Activated B cell treated with CpG ODN at 0.5 μM for 24 hours (primary cell): ENCODE measurements at regions of chr12 and their contacts with region 1.

Region 1: GRCh38 chr12:26832822-26833742 is at the start of gene ITPR2:
- DNase-seq: peak; percentile 94
- ATAC-seq: peak; percentile 89
- H3K4me3 Mint-ChIP-seq: peak within 1 kb of the TSS; percentile 96
- H3K27ac Mint-ChIP-seq: peak within 1 kb of the TSS; percentile 99
- H3K4me1 Mint-ChIP-seq: peaks cover 45% of the 10 kb centered on the region
- H3K27me3 Mint-ChIP-seq: no peaks in the 10 kb centered on the region
- CTCF ChIP-seq: no peak
- total RNA-seq, gene ITPR2: 66.3 and 74.5 TPM in 2 replicates

Region 2: DNA sequence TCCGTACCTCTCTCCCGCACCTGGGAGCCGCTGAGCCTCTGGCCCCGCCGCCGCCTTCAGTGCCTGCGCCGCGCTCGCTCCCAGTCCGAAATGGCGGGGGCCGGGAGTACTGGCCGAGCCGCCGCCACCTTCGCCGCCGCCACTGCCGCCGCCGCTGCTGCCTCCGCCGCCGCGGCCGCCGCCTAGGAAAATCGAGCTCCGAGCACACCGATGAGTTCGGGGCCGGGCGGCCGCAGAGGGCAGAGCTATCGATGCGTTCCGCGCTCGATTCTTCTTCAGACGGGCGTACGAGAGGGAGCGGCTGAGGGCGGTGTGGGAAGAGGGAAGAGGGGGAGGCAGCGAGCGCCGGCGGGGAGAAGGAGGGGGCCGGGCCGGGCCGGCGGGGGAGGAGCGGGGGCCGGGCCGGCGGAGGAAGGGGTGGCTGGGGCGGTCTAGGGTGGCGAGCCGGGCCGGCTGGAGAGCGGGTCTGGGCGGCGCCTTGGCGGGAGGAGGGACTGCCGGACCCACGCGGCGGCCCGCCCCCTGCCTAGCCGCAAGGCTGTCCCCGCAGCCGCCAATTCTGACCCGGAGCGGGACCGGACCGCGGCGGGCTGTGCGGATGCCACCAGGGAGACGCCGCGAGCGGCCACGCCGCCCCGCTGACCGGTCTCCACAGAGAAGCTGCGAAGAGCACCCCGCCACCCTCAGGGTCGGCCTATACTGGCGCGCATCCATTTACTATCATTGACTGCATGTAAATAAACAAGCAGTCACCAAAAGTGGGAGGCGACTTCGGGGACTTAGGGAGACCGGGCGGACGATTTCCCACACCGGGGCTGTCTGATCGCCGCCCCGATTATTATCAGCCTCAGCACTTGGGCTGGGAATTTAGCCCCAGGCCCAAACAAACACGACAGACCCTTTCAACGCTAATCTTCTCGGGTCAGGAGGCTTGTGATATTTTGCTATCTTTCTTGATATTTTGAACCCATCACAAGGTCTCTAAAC is 1582.0 kb before region 1 on chr12 and contains the start of gene KRAS:
- CTCF ChIA-PET with region 1: no interaction called
- POLR2A ChIA-PET with region 1: no interaction called
- intact Hi-C with region 1: loop called (anchors 5 kb)
- DNase-seq: peak; percentile 88
- ATAC-seq: peak; percentile 85
- H3K4me3 Mint-ChIP-seq: peak within 1 kb of the TSS; percentile 95
- H3K27ac Mint-ChIP-seq: peak within 1 kb of the TSS; percentile 95
- H3K4me1 Mint-ChIP-seq: peaks cover 48% of the 10 kb centered on the region
- H3K27me3 Mint-ChIP-seq: no peaks in the 10 kb centered on the region
- CTCF ChIP-seq: no peak
- total RNA-seq, gene KRAS: 43.3 and 45.8 TPM in 2 replicates

Region 3: DNA sequence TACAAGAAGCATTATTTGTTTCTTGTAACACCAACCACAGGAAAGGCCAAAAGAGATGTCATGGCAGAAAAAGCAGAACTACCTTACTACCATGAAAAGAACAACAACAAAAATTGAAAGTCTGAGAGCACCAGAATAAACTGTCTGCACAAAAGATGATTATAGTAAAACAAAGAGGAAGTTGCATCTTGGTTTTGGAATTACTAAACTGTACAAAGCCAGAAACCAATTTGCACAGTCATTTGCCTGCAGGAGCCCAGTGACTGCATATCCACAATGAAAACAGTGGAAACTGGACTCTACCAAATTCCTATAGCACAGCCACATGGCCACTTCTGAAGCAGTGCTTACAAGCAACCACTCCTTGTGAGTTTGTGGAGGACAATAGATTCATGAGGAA is 361.5 kb before region 1 on chr12:
- CTCF ChIA-PET with region 1: no interaction called
- POLR2A ChIA-PET with region 1: no interaction called
- intact Hi-C with region 1: loop called (anchors 2 kb)
- DNase-seq: no peak
- ATAC-seq: peak; percentile 60
- H3K4me3 Mint-ChIP-seq: peak overlapping the region; percentile 49
- H3K27ac Mint-ChIP-seq: peak overlapping the region; percentile 86
- H3K4me1 Mint-ChIP-seq: peaks cover 54% of the 10 kb centered on the region
- H3K27me3 Mint-ChIP-seq: no peaks in the 10 kb centered on the region
- CTCF ChIP-seq: no peak

Region 4: DNA sequence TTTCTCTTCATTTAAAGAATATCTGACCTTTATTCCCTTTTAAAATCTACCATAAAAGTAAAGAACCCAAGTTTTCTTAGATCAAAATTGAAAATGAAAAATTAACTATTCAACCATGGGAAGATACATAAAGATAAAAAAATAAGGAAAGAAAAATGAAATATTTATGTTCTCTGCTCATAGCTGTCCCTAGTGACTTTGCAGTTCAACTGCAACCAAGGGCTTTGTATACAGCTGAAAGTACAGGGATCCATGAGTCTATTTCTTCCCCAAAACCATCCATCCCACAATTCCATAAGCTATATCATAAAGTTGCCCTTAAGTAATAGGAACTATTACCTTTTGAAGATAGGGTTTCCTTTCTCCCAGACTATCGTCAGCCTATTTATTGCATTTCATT is 113.2 kb before region 1 on chr12:
- CTCF ChIA-PET with region 1: no interaction called
- POLR2A ChIA-PET with region 1: interaction called, 10 read pairs
- intact Hi-C with region 1: loop called (anchors 2 kb)
- DNase-seq: no peak
- ATAC-seq: no peak
- H3K4me3 Mint-ChIP-seq: no peak overlapping the region
- H3K27ac Mint-ChIP-seq: no peak overlapping the region
- H3K4me1 Mint-ChIP-seq: peaks cover 11% of the 10 kb centered on the region
- H3K27me3 Mint-ChIP-seq: no peaks in the 10 kb centered on the region
- CTCF ChIP-seq: no peak

Region 5: GRCh38 chr12:26748741-26749431 is 84.2 kb before region 1 on chr12:
- CTCF ChIA-PET with region 1: no interaction called
- POLR2A ChIA-PET with region 1: interaction called, 13 read pairs
- intact Hi-C with region 1: loop called (anchors 5 kb)
- DNase-seq: no peak
- ATAC-seq: peak; percentile 19
- H3K4me3 Mint-ChIP-seq: peak overlapping the region; percentile 11
- H3K27ac Mint-ChIP-seq: peak overlapping the region; percentile 61
- H3K4me1 Mint-ChIP-seq: peaks cover 53% of the 10 kb centered on the region
- H3K27me3 Mint-ChIP-seq: no peaks in the 10 kb centered on the region
- CTCF ChIP-seq: no peak

Region 6: GRCh38 chr12:26845057-26845666 is 12.1 kb after region 1 on chr12:
- CTCF ChIA-PET with region 1: interaction called, 22 read pairs
- POLR2A ChIA-PET with region 1: interaction called, 31 read pairs
- intact Hi-C with region 1: loop called (anchors 1 kb)
- DNase-seq: no peak
- ATAC-seq: peak; percentile 37
- H3K4me3 Mint-ChIP-seq: no peak overlapping the region
- H3K27ac Mint-ChIP-seq: no peak overlapping the region
- H3K4me1 Mint-ChIP-seq: peaks cover 20% of the 10 kb centered on the region
- H3K27me3 Mint-ChIP-seq: no peaks in the 10 kb centered on the region
- CTCF ChIP-seq: no peak

Region 7: GRCh38 chr12:26937875-26938700 is 105.0 kb after region 1 on chr12 and contains the starts of genes FGFR1OP2 and INTS13:
- CTCF ChIA-PET with region 1: no interaction called
- POLR2A ChIA-PET with region 1: interaction called, 4 read pairs
- intact Hi-C with region 1: loop called (anchors 1 kb)
- DNase-seq: peak; percentile 89
- ATAC-seq: peak; percentile 92
- H3K4me3 Mint-ChIP-seq: peak within 1 kb of the TSS; percentile 99
- H3K27ac Mint-ChIP-seq: peak within 1 kb of the TSS; percentile 99
- H3K4me1 Mint-ChIP-seq: peaks cover 73% of the 10 kb centered on the region
- H3K27me3 Mint-ChIP-seq: no peaks in the 10 kb centered on the region
- CTCF ChIP-seq: no peak
- total RNA-seq, gene FGFR1OP2: 42.7 and 45.0 TPM in 2 replicates
- total RNA-seq, gene INTS13: 25.0 and 25.2 TPM in 2 replicates

Region 8: DNA sequence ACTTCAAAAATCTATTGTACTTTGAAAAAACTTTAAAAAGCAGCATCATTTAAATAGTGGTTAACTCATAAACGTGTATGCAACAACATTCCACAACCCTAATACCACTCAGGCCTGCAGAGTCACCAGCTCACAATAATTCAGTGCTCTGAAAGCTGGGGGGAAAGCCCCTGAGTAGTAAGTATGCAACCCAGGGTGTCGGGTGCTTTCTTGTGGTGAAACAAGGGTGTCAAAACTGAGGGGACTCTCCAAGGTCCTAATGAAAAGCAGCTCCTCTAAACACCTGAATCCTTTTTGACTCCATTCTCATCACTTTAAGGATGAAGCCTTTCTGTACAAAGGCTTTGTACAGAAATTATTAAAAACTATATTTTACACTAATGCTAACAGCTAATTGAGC is 138.9 kb after region 1 on chr12:
- CTCF ChIA-PET with region 1: no interaction called
- POLR2A ChIA-PET with region 1: no interaction called
- intact Hi-C with region 1: no loop called
- DNase-seq: no peak
- ATAC-seq: peak; percentile 97
- H3K4me3 Mint-ChIP-seq: no peak overlapping the region
- H3K27ac Mint-ChIP-seq: peak overlapping the region; percentile 30
- H3K4me1 Mint-ChIP-seq: peaks cover 26% of the 10 kb centered on the region
- H3K27me3 Mint-ChIP-seq: no peaks in the 10 kb centered on the region
- CTCF ChIP-seq: no peak